ENCODE measurements at regions of chr3 and their contacts with region 1.

Region 1: GRCh38 chr3:115085197-115085865 is 61.8 kb downstream of the ZBTB20 start:
- DNase-seq: no peak
- ATAC-seq: no peak
- H3K4me3 Mint-ChIP-seq: no peak overlapping the region
- H3K27ac Mint-ChIP-seq: peak overlapping the region; percentile 1
- H3K4me1 Mint-ChIP-seq: peaks cover 40% of the 10 kb centered on the region
- H3K27me3 Mint-ChIP-seq: no peaks in the 10 kb centered on the region

Region 2: DNA sequence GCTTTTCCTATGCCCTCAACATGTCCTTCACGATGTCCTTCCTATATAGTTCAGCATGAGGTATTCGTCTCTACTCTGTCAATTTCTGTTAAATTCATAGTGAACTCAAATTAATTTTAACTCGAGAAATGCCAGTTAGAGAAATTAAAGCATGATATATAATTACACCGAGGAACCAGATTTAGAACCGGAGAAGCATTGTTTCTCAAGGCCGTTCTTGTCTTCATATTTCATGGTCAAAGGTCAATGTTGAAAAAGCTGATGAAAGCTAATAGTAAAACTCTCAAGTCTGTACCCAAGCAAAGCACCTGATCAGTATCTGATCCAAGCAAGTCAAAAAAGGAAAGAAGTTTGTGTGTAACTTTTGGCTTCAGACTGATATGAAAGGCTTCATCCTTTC is 102.1 kb before region 1 on chr3:
- CTCF ChIA-PET with region 1: no interaction called
- POLR2A ChIA-PET with region 1: no interaction called
- intact Hi-C with region 1: no loop called
- DNase-seq: no peak
- ATAC-seq: no peak
- H3K4me3 Mint-ChIP-seq: no peak overlapping the region
- H3K27ac Mint-ChIP-seq: no peak overlapping the region
- H3K4me1 Mint-ChIP-seq: peaks cover 2% of the 10 kb centered on the region
- H3K27me3 Mint-ChIP-seq: no peaks in the 10 kb centered on the region

Region 3: GRCh38 chr3:115099986-115100571 is 14.7 kb after region 1 on chr3:
- CTCF ChIA-PET with region 1: interaction called, 10 read pairs
- POLR2A ChIA-PET with region 1: no interaction called
- intact Hi-C with region 1: no loop called
- DNase-seq: peak; percentile 15
- ATAC-seq: peak; percentile 92
- H3K4me3 Mint-ChIP-seq: peak overlapping the region; percentile 80
- H3K27ac Mint-ChIP-seq: peak overlapping the region; percentile 89
- H3K4me1 Mint-ChIP-seq: peaks cover 42% of the 10 kb centered on the region
- H3K27me3 Mint-ChIP-seq: no peaks in the 10 kb centered on the region

Measured in activated CD4-positive, alpha-beta T cell treated with anti-CD3 and anti-CD28 coated beads for 36 hours (primary cell).